ENCODE measurements at regions of chr21 and their contacts with region 1.

Region 1: GRCh38 chr21:45973659-45974072 is 7.9 kb upstream of the COL6A1 start:
- DNase-seq: peak; percentile 92
- H3K4me3 ChIP-seq: peak overlapping the region; percentile 45
- H3K27ac ChIP-seq: peak overlapping the region; percentile 73
- H3K4me1 ChIP-seq: peaks cover 67% of the 10 kb centered on the region
- H3K27me3 ChIP-seq: no peaks in the 10 kb centered on the region
- CTCF ChIP-seq: peak; percentile 81

Region 2: GRCh38 chr21:46097336-46098293 is 123.9 kb after region 1 on chr21 and contains the start of gene COL6A2:
- CTCF ChIA-PET with region 1: no interaction called
- POLR2A ChIA-PET with region 1: no interaction called
- intact Hi-C with region 1: loop called (anchors 2 kb)
- DNase-seq: peak; percentile 54
- H3K4me3 ChIP-seq: peak within 1 kb of the TSS; percentile 59
- H3K27ac ChIP-seq: no peak within 1 kb of the TSS
- H3K4me1 ChIP-seq: no peaks in the 10 kb centered on the region
- H3K27me3 ChIP-seq: peaks cover 2% of the 10 kb centered on the region
- CTCF ChIP-seq: 0 out of 2 replicates have a peak, but pooled peaks have one; percentile 21
- total RNA-seq, gene COL6A2: 15.0 and 29.0 TPM in 2 replicates

Region 3: GRCh38 chr21:46108827-46109312 is 135.2 kb after region 1 on chr21:
- CTCF ChIA-PET with region 1: interaction called, 13 read pairs
- POLR2A ChIA-PET with region 1: no interaction called
- intact Hi-C with region 1: no loop called
- DNase-seq: no peak
- H3K4me3 ChIP-seq: no peak overlapping the region
- H3K27ac ChIP-seq: no peak overlapping the region
- H3K4me1 ChIP-seq: no peaks in the 10 kb centered on the region
- H3K27me3 ChIP-seq: no peaks in the 10 kb centered on the region
- CTCF ChIP-seq: no peak

Region 4: GRCh38 chr21:46144464-46145070 is 170.9 kb after region 1 on chr21:
- CTCF ChIA-PET with region 1: interaction called, 20 read pairs
- POLR2A ChIA-PET with region 1: no interaction called
- intact Hi-C with region 1: loop called (anchors 5 kb)
- DNase-seq: no peak
- H3K4me3 ChIP-seq: no peak overlapping the region
- H3K27ac ChIP-seq: no peak overlapping the region
- H3K4me1 ChIP-seq: no peaks in the 10 kb centered on the region
- H3K27me3 ChIP-seq: no peaks in the 10 kb centered on the region
- CTCF ChIP-seq: no peak

Region 5: GRCh38 chr21:46228345-46229051 is 254.8 kb after region 1 on chr21 and contains the start of gene LSS:
- CTCF ChIA-PET with region 1: no interaction called
- POLR2A ChIA-PET with region 1: no interaction called
- intact Hi-C with region 1: loop called (anchors 5 kb)
- DNase-seq: peak; percentile 99
- H3K4me3 ChIP-seq: peak within 1 kb of the TSS; percentile 92
- H3K27ac ChIP-seq: peak within 1 kb of the TSS; percentile 87
- H3K4me1 ChIP-seq: peaks cover 18% of the 10 kb centered on the region
- H3K27me3 ChIP-seq: no peaks in the 10 kb centered on the region
- CTCF ChIP-seq: no peak
- total RNA-seq, gene LSS: 130 and 151 TPM in 2 replicates

Measured in A673 (cell line).